GM18951 (cell line): ENCODE measurements at regions of chr1 and their contacts with region 1.

Region 1: GRCh38 chr1:241688940-241689368 is 36.9 kb downstream of the WDR64 start:
- POLR2A ChIP-seq: no peak

Region 2: GRCh38 chr1:241181471-241181870 is 507.5 kb before region 1 on chr1:
- in situ Hi-C with region 1: loop called (anchors 10 kb)
- POLR2A ChIP-seq: no peak

Region 3: DNA sequence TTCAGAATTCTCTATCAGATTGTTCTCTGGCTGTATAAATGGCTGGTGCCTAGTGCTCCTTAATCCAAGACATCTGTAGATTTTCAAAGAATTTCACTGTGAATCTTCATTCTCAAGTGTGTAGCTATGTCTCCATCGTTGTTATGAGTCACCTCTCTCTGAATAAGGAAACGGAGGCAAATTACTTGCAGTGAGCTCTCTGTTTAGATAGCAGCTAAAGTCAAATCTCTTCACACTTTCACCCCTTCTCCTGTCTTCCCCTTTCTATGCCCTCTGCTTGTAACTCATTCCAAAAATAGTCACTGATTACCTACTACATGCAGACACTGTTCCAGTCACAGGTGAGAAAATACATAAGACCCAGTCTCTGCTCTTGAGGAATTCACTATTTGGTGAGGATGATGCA is 88.5 kb before region 1 on chr1:
- in situ Hi-C with region 1: no loop called
- POLR2A ChIP-seq: no peak